Gastrocnemius medialis (tissue), 4 donors: ENCODE measurements at regions of chr9 and their contacts with region 1.

Region 1: GRCh38 chr9:25964239-25964638 is 286.0 kb upstream of the TUSC1 start:
- DNase-seq: no peak
- ATAC-seq: no peak
- H3K4me3 ChIP-seq: no peak overlapping the region
- H3K27ac ChIP-seq: no peak overlapping the region
- H3K4me1 ChIP-seq: no peaks in the 10 kb centered on the region
- H3K27me3 ChIP-seq: no peaks in the 10 kb centered on the region
- CTCF ChIP-seq: peak in 1 of 5 experiments; percentile 28
- POLR2A ChIP-seq: no peak

Region 2: GRCh38 chr9:25691786-25692185 is 272.5 kb before region 1 on chr9:
- in situ Hi-C with region 1: no loop called
- intact Hi-C with region 1: no loop called
- DNase-seq: no peak
- ATAC-seq: no peak
- H3K4me3 ChIP-seq: no peak overlapping the region
- H3K27ac ChIP-seq: no peak overlapping the region
- H3K4me1 ChIP-seq: no peaks in the 10 kb centered on the region
- H3K27me3 ChIP-seq: no peaks in the 10 kb centered on the region
- CTCF ChIP-seq: no peak
- POLR2A ChIP-seq: no peak

Region 3: DNA sequence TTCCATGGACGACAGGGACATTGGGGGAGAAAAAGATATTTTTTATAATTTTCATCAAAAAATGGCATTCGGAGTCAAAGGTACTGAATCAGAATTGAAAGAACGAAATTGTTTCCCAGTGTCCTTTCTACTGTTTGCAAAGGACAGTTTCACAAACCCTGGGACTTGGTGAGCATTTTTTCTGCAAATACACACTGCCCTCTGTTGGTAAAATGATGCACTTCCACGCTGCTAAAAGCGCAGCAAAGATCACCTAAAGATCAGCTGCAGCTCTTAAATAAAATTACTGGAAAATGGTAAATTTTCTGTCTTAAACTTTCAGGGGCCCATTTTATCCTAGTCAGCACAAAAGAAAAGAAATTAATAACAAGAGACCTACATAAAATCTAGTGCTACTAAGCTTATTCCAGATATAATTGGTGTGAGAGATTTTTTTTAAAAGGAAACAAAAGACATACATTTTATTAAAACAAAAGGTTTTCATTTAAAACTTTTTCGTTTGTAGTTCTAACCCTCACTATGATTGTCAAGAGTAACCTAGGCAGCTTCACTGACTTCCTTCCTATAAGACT is 362.3 kb after region 1 on chr9:
- in situ Hi-C with region 1: loop called in 2 of 4 experiments (anchors 10 to 25 kb)
- intact Hi-C with region 1: no loop called
- DNase-seq: no peak
- ATAC-seq: peak in 1 of 2 donors; percentile 56
- H3K4me3 ChIP-seq: no peak overlapping the region
- H3K27ac ChIP-seq: no peak overlapping the region
- H3K4me1 ChIP-seq: no peaks in the 10 kb centered on the region
- H3K27me3 ChIP-seq: no peaks in the 10 kb centered on the region
- CTCF ChIP-seq: peak in 3 of 5 experiments; percentile 21 to 64 (median 55)
- POLR2A ChIP-seq: no peak